ENCODE measurements at regions of chr3 and their contacts with region 1.

Region 1: GRCh38 chr3:187919048-187919447 is 173.8 kb upstream of the BCL6 start:
- DNase-seq: peak; percentile 75
- H3K4me3 Mint-ChIP-seq: peak overlapping the region; percentile 51
- H3K27ac Mint-ChIP-seq: peak overlapping the region; percentile 94
- H3K4me1 Mint-ChIP-seq: peaks cover 75% of the 10 kb centered on the region
- H3K27me3 Mint-ChIP-seq: peaks cover 3% of the 10 kb centered on the region

Region 2: GRCh38 chr3:187802928-187803259 is 116.2 kb before region 1 on chr3:
- CTCF ChIA-PET with region 1: interaction called, 10 read pairs
- POLR2A ChIA-PET with region 1: interaction called, 5 read pairs
- intact Hi-C with region 1: loop called (anchors 1 kb)
- DNase-seq: peak; percentile 89
- H3K4me3 Mint-ChIP-seq: peak overlapping the region; percentile 54
- H3K27ac Mint-ChIP-seq: peak overlapping the region; percentile 95
- H3K4me1 Mint-ChIP-seq: peaks cover 96% of the 10 kb centered on the region
- H3K27me3 Mint-ChIP-seq: no peaks in the 10 kb centered on the region

Region 3: DNA sequence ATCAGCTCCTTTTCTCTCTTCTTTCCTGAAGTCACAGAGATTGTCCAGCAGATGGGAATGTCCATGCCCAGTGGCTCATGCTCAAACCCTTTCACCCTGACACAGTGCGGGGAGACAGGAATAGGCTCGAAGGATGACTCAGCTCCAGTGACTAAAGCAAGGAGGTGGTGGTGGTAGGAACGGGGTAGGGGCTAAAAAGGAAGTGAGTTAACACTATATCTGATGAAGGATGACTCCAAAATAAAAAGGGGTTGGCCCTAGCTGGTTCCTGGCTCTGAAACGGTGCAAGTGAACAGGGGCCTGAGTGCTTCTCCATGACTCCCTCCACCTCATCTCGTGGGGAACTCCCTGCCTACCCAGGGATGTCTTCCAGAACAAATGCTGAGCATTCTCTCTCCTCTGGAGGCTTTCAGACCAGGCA is 67.5 kb after region 1 on chr3:
- CTCF ChIA-PET with region 1: no interaction called
- POLR2A ChIA-PET with region 1: no interaction called
- intact Hi-C with region 1: loop called (anchors 2 kb)
- DNase-seq: peak; percentile 77
- H3K4me3 Mint-ChIP-seq: peak overlapping the region; percentile 2
- H3K27ac Mint-ChIP-seq: peak overlapping the region; percentile 83
- H3K4me1 Mint-ChIP-seq: peaks cover 56% of the 10 kb centered on the region
- H3K27me3 Mint-ChIP-seq: no peaks in the 10 kb centered on the region

Region 4: GRCh38 chr3:188257384-188258026 is 338.5 kb after region 1 on chr3:
- CTCF ChIA-PET with region 1: interaction called, 3 read pairs
- POLR2A ChIA-PET with region 1: interaction called, 3 read pairs
- intact Hi-C with region 1: loop called (anchors 1 kb)
- DNase-seq: no peak
- H3K4me3 Mint-ChIP-seq: no peak overlapping the region
- H3K27ac Mint-ChIP-seq: peak overlapping the region; percentile 47
- H3K4me1 Mint-ChIP-seq: peaks cover 49% of the 10 kb centered on the region
- H3K27me3 Mint-ChIP-seq: no peaks in the 10 kb centered on the region

Region 5: GRCh38 chr3:188697127-188697526 is 778.1 kb after region 1 on chr3:
- CTCF ChIA-PET with region 1: no interaction called
- POLR2A ChIA-PET with region 1: no interaction called
- intact Hi-C with region 1: loop called (anchors 1 kb)
- DNase-seq: peak; percentile 55
- H3K4me3 Mint-ChIP-seq: no peak overlapping the region
- H3K27ac Mint-ChIP-seq: peak overlapping the region; percentile 7
- H3K4me1 Mint-ChIP-seq: peaks cover 50% of the 10 kb centered on the region
- H3K27me3 Mint-ChIP-seq: peaks cover 7% of the 10 kb centered on the region

Region 6: DNA sequence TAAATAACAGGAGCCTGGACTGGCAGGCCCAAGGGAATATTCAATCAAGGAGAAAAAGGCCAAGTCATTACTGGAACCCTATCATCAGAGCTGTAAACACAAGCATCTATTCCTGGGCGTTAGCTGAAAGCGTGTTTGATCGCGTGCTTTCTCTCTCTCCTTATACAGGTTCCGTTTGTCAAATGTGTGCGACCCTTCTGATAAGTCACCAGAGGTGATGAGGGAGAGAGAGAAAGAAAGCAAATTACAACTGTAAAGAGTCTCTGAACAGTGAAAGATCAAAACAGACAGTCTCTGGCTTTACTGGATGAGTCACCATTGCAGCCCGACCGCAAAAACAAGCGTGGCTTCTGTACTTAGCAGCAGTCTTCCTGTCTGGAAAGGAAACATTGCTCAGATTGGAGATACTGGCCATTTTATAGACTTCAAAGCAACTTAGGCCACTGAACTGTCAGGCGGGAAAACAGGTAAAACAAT is 1213.2 kb after region 1 on chr3:
- CTCF ChIA-PET with region 1: no interaction called
- POLR2A ChIA-PET with region 1: no interaction called
- intact Hi-C with region 1: loop called (anchors 10 kb)
- DNase-seq: peak; percentile 90
- H3K4me3 Mint-ChIP-seq: peak overlapping the region; percentile 50
- H3K27ac Mint-ChIP-seq: peak overlapping the region; percentile 83
- H3K4me1 Mint-ChIP-seq: peaks cover 26% of the 10 kb centered on the region
- H3K27me3 Mint-ChIP-seq: no peaks in the 10 kb centered on the region